GM18951 (cell line): ENCODE measurements at regions of chr10 and their contacts with region 1.

Region 1: GRCh38 chr10:102009801-102010425 is 46.1 kb downstream of the ARMH3 start:
- POLR2A ChIP-seq: no peak

Region 2: GRCh38 chr10:100803492-100803891 is 1206.4 kb before region 1 on chr10:
- in situ Hi-C with region 1: no loop called
- POLR2A ChIP-seq: no peak

Region 3: DNA sequence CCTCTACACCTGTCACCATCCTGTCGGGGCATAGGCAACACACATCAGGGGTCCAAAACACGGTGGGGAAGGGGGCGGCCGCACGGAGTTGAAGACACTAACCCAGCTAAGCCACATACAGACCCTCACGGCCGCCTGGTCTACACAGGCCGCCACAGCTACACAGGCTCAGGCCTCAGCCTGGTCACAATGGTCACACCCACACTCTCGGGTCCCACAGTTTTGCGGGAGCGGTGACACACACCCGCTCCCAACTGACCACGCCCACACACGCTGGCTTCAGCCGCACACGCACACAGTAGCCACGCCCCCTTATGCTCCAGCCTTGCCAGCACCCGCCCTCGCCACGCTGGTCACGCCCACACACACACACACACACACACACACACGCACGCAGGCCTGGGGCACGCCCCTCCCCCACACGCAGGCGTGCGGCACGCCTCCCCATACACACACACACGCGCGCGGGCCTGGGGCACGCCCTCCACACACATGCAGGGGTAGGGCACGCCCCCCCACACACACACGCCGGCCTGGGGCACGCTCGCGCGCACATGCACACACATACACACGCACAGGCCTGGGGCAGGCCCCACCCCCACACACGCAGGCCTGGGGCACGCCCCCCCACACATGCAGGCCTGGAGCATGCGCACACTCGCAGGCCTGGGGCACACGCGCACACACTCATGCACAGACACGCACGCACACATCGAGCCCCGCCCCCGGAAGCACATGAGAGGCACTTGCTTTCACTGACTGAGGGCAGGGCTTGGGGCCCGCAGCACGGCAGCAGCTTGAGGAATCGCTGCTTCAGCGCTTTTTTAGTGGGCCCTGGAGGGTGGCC is 179.4 kb before region 1 on chr10:
- in situ Hi-C with region 1: loop called (anchors 5 kb)
- POLR2A ChIP-seq: peak; percentile 61

Region 4: DNA sequence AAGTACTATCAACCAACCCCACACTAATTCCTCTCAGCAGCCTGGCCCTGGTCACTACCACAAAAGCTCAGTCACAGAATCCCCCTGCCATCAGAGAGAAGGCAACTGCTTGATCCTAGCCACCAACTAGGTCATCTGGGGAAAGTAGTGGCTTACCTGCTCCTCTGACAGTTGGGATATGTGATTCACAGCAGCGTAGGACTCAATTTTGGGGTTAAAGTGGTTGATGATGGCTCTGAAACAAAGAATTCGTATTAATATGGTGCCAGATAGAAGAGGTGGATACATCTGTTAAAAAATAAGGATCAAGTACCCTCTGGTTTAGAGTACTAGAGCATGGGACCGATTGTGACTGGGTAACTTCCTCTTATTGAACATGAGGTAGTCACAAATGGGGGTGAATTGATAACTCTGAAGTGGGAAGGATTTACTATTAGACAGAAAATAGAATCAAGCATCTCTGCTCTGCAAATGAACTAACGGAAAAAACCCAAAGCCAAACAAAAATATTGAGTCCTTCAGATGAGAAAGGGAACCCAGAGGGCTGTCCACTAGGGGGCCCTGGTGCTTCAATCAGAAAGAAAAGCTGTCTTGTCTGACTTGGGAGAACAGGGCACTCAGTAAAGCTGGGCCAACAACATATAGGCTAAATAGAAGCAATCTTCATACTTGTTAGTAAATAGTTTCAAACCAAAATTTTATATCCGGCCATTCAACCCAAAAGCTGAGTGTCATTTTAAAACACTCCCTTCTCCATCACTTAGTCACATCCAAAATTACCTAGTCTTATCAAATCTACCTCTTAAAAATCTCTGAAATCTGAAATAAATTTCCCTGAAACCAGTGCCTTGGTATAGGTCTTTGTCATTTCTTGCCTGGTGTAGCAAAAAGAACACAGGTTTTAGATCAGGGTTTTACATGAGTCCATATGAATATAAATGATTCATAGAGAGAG is 120.4 kb before region 1 on chr10:
- in situ Hi-C with region 1: loop called (anchors 5 kb)
- POLR2A ChIP-seq: no peak

Region 5: GRCh38 chr10:101920546-101920945 is 89.4 kb before region 1 on chr10:
- in situ Hi-C with region 1: no loop called
- POLR2A ChIP-seq: no peak

Region 6: GRCh38 chr10:101941871-101942270 is 68.0 kb before region 1 on chr10:
- in situ Hi-C with region 1: no loop called
- POLR2A ChIP-seq: no peak